ENCODE measurements at regions of chr4 and their contacts with region 1.

Region 1: GRCh38 chr4:15231265-15232091 is 196.4 kb upstream of the C1QTNF7 start:
- DNase-seq: peak; percentile 80
- ATAC-seq: peak; percentile 81
- H3K4me3 Mint-ChIP-seq: no peak overlapping the region
- H3K27ac Mint-ChIP-seq: no peak overlapping the region
- H3K4me1 Mint-ChIP-seq: peaks cover 23% of the 10 kb centered on the region
- H3K27me3 Mint-ChIP-seq: no peaks in the 10 kb centered on the region

Region 2: GRCh38 chr4:15202481-15202880 is 29.0 kb before region 1 on chr4:
- CTCF ChIA-PET with region 1: no interaction called
- DNase-seq: no peak
- ATAC-seq: no peak
- H3K4me3 Mint-ChIP-seq: no peak overlapping the region
- H3K27ac Mint-ChIP-seq: no peak overlapping the region
- H3K4me1 Mint-ChIP-seq: no peaks in the 10 kb centered on the region
- H3K27me3 Mint-ChIP-seq: no peaks in the 10 kb centered on the region

Region 3: GRCh38 chr4:15396157-15396800 is 164.8 kb after region 1 on chr4:
- CTCF ChIA-PET with region 1: interaction called, 20 read pairs
- DNase-seq: peak; percentile 73
- ATAC-seq: peak; percentile 70
- H3K4me3 Mint-ChIP-seq: no peak overlapping the region
- H3K27ac Mint-ChIP-seq: no peak overlapping the region
- H3K4me1 Mint-ChIP-seq: peaks cover 13% of the 10 kb centered on the region
- H3K27me3 Mint-ChIP-seq: no peaks in the 10 kb centered on the region